IMR-90 (cell line): ENCODE measurements at regions of chr7 and their contacts with region 1.

Region 1: GRCh38 chr7:116236020-116236630 is 25.8 kb downstream of the TES start:
- DNase-seq: peak; percentile 65
- ATAC-seq: peak; percentile 59
- H3K4me3 ChIP-seq: no peak overlapping the region
- H3K27ac ChIP-seq: no peak overlapping the region
- H3K4me1 ChIP-seq: peaks cover 15% of the 10 kb centered on the region
- H3K27me3 ChIP-seq: no peaks in the 10 kb centered on the region
- CTCF ChIP-seq: peak; percentile 72
- POLR2A ChIP-seq: no peak
- RAD21 ChIP-seq: peak; percentile 78

Region 2: DNA sequence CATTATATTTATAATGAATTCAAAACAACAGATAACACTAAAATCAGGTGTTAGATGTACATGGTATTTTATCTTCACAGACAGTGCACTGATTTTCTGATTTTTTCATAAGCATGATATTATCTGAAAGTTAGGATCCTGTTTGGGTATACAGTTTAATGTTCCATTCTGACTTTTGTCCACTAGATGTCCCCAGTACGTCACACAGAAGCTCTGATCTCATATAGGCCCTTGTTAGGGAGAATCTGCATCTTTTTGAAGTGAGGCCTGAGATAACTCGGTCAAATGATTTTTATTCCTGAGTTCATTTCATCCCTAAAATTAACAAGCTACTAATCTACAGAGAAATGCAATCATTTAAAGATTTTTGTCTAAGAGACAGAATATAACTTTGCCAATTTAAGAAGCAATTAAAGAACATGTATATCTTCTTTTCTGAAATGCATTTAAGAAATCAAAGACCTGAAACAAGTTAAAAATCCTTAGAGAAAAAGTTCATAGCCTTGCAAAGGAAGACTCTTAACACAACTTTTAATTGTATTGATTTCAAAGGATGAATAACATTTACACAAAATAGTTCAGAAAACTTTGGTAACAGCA is 97.8 kb before region 1 on chr7:
- CTCF ChIA-PET with region 1: interaction called, 4 read pairs
- POLR2A ChIA-PET with region 1: no interaction called
- dilution Hi-C with region 1: no loop called
- in situ Hi-C with region 1: loop called (anchors 5 kb)
- intact Hi-C with region 1: loop called (anchors 1 kb)
- DNase-seq: peak; percentile 83
- ATAC-seq: peak; percentile 90
- H3K4me3 ChIP-seq: no peak overlapping the region
- H3K27ac ChIP-seq: no peak overlapping the region
- H3K4me1 ChIP-seq: peaks cover 9% of the 10 kb centered on the region
- H3K27me3 ChIP-seq: no peaks in the 10 kb centered on the region
- CTCF ChIP-seq: peak; percentile 88
- POLR2A ChIP-seq: no peak
- RAD21 ChIP-seq: peak; percentile 84

Region 3: GRCh38 chr7:116173051-116174028 is 62.8 kb before region 1 on chr7:
- CTCF ChIA-PET with region 1: interaction called, 49 read pairs
- POLR2A ChIA-PET with region 1: interaction called, 4 read pairs
- dilution Hi-C with region 1: no loop called
- in situ Hi-C with region 1: loop called (anchors 5 kb)
- intact Hi-C with region 1: no loop called
- DNase-seq: peak; percentile 69
- ATAC-seq: peak; percentile 31
- H3K4me3 ChIP-seq: no peak overlapping the region
- H3K27ac ChIP-seq: no peak overlapping the region
- H3K4me1 ChIP-seq: peaks cover 15% of the 10 kb centered on the region
- H3K27me3 ChIP-seq: no peaks in the 10 kb centered on the region
- CTCF ChIP-seq: peak; percentile 71
- POLR2A ChIP-seq: no peak
- RAD21 ChIP-seq: peak; percentile 87

Region 4: DNA sequence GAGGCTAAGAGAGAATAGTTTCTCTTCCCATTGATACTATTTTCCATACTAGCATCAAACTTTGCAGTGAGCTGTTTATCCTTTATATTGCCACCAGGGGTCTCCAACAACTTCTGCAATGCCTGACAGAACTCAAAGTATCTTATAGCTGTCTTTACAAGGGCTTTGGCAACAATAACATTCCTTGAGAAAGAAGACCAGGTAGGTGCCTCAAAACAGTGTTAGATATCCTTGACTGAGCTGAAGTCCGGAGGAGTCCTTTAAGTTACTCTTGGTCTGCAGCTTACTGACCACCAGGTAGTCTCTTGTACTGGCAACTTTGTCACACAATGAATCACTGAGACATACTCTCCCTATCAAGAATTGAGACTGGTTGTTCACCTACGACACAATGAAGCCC is 55.8 kb before region 1 on chr7:
- CTCF ChIA-PET with region 1: interaction called, 49 read pairs
- POLR2A ChIA-PET with region 1: interaction called, 4 read pairs
- dilution Hi-C with region 1: no loop called
- in situ Hi-C with region 1: loop called (anchors 5 kb)
- intact Hi-C with region 1: loop called (anchors 1 kb)
- DNase-seq: peak; percentile 68
- ATAC-seq: peak; percentile 62
- H3K4me3 ChIP-seq: no peak overlapping the region
- H3K27ac ChIP-seq: no peak overlapping the region
- H3K4me1 ChIP-seq: peaks cover 3% of the 10 kb centered on the region
- H3K27me3 ChIP-seq: no peaks in the 10 kb centered on the region
- CTCF ChIP-seq: peak; percentile 82
- POLR2A ChIP-seq: no peak
- RAD21 ChIP-seq: peak; percentile 82

Region 5: GRCh38 chr7:116211006-116211912 is 24.9 kb before region 1 on chr7:
- CTCF ChIA-PET with region 1: interaction called, 3 read pairs
- POLR2A ChIA-PET with region 1: no interaction called
- dilution Hi-C with region 1: no loop called
- in situ Hi-C with region 1: no loop called
- intact Hi-C with region 1: loop called (anchors 2 kb)
- DNase-seq: peak; percentile 91
- ATAC-seq: peak; percentile 76
- H3K4me3 ChIP-seq: peak overlapping the region; percentile 86
- H3K27ac ChIP-seq: peak overlapping the region; percentile 55
- H3K4me1 ChIP-seq: peaks cover 2% of the 10 kb centered on the region
- H3K27me3 ChIP-seq: no peaks in the 10 kb centered on the region
- CTCF ChIP-seq: no peak
- POLR2A ChIP-seq: peak; percentile 94
- RAD21 ChIP-seq: no peak; the same call in 1 of the 2 replicates

Region 6: GRCh38 chr7:117251687-117252086 is 1015.6 kb after region 1 on chr7:
- CTCF ChIA-PET with region 1: no interaction called
- POLR2A ChIA-PET with region 1: no interaction called
- dilution Hi-C with region 1: no loop called
- in situ Hi-C with region 1: no loop called
- intact Hi-C with region 1: loop called (anchors 5 kb)
- DNase-seq: peak; percentile 91
- ATAC-seq: peak; percentile 21; the same call in 1 of the 2 replicates
- H3K4me3 ChIP-seq: no peak overlapping the region
- H3K27ac ChIP-seq: peak overlapping the region; percentile 62; the same call in 1 of the 2 replicates
- H3K4me1 ChIP-seq: peaks cover 26% of the 10 kb centered on the region
- H3K27me3 ChIP-seq: no peaks in the 10 kb centered on the region
- CTCF ChIP-seq: no peak
- POLR2A ChIP-seq: no peak
- RAD21 ChIP-seq: no peak